Activated CD8-positive, alpha-beta T cell treated with anti-CD3 and anti-CD28 coated beads, Interleukin-2, amount 10 ng/mL, durations not matched to agents 7 days and 5 days (primary cell): ENCODE measurements at regions of chr5 and their contacts with region 1.

Region 1: GRCh38 chr5:126499853-126500342 is 76.7 kb downstream of the GRAMD2B start:
- DNase-seq: peak; percentile 56
- ATAC-seq: peak; percentile 76
- H3K4me3 Mint-ChIP-seq: no peak overlapping the region
- H3K27ac Mint-ChIP-seq: no peak overlapping the region
- H3K4me1 Mint-ChIP-seq: peaks cover 5% of the 10 kb centered on the region
- H3K27me3 Mint-ChIP-seq: no peaks in the 10 kb centered on the region

Region 2: DNA sequence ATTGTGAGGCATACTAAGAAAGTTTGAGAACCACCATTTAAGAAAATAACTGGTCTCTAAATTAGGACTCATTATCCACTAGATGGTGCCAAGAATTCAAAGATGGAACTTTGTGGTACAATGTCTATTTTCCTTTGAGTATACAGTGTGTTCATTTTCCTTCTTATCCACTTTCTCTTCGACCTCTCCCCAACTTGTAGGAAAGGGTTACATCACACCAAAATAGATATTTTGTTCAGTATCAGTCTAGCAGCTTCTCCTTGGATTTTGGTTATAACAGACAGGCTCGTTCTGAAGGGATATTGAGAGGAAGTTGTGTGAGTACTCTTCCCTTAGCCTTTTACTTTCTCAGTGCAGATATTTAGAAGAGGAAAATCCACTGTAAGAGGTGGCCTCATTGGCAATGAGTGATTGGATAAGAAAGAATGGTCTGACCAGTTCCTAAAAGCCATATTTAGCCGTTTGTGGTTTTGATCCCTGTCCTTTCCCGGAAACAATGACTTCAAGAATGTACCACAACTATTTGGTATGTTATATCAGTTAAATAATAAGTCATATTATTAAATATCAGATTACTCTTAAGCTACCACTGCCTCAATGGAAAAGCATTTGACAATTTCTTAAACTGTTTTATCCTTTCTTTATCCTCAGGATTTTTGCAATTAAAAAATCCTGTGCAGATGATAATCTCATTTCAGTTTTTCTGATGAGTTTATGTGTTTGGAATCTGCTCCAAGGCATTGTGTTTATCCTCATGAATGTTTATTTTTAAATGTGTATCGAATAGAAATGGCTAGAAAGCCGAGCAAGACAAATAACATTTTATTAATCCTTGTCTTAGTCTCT is 145.7 kb before region 1 on chr5:
- CTCF ChIA-PET with region 1: interaction called, 89 read pairs
- POLR2A ChIA-PET with region 1: no interaction called
- DNase-seq: no peak
- ATAC-seq: peak; percentile 67
- H3K4me3 Mint-ChIP-seq: peak overlapping the region; percentile 2
- H3K27ac Mint-ChIP-seq: no peak overlapping the region
- H3K4me1 Mint-ChIP-seq: peaks cover 18% of the 10 kb centered on the region
- H3K27me3 Mint-ChIP-seq: peaks cover 3% of the 10 kb centered on the region

Region 3: GRCh38 chr5:126449751-126450271 is 50.1 kb before region 1 on chr5:
- CTCF ChIA-PET with region 1: interaction called, 20 read pairs
- POLR2A ChIA-PET with region 1: interaction called, 3 read pairs
- DNase-seq: peak; percentile 79
- ATAC-seq: peak; percentile 93
- H3K4me3 Mint-ChIP-seq: peak overlapping the region; percentile 82
- H3K27ac Mint-ChIP-seq: peak overlapping the region; percentile 100
- H3K4me1 Mint-ChIP-seq: peaks cover 60% of the 10 kb centered on the region
- H3K27me3 Mint-ChIP-seq: no peaks in the 10 kb centered on the region

Region 4: DNA sequence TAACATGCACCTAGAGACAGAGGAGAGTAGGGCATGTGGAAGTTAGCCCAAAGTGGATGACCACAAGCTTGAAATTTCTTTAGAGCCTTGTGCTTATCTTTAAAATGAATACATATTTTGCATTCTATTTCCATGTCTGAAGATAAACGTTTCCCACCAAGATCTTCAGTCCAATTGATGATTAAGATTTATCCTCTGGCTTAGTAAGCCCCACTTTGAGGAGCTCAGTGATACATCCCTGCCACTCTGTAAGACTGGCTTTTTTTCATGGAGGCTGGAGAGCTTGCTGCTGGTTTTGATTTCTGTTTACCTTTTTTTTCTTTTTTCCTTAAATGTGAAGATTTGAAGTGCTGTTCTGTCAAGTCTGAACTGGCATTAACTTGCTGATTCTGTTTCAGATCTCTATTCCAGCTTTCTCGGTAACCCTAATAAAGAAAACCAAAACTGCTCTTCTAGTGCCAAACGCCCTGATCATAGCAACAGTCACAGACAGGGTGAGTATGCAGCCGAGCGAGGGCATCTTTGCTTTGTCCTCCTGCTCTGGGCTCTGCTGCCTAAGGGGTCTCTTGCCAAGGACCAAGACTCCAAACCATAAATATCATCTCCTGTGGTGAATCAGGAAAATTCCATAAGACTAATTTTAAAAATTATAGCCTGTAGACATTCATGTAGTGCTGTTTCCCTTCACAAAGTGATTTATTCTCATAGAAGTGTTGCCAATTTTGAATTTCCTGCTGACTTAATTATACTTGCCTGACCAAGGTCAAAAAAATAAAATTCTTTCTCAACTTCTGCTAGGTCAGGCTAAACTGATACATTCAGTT is 22.4 kb before region 1 on chr5:
- CTCF ChIA-PET with region 1: interaction called, 35 read pairs
- POLR2A ChIA-PET with region 1: no interaction called
- DNase-seq: no peak
- ATAC-seq: no peak
- H3K4me3 Mint-ChIP-seq: no peak overlapping the region
- H3K27ac Mint-ChIP-seq: no peak overlapping the region
- H3K4me1 Mint-ChIP-seq: no peaks in the 10 kb centered on the region
- H3K27me3 Mint-ChIP-seq: no peaks in the 10 kb centered on the region

Region 5: GRCh38 chr5:126519634-126520592 is 20.0 kb after region 1 on chr5:
- CTCF ChIA-PET with region 1: interaction called, 21 read pairs
- POLR2A ChIA-PET with region 1: no interaction called
- DNase-seq: no peak
- ATAC-seq: no peak
- H3K4me3 Mint-ChIP-seq: no peak overlapping the region
- H3K27ac Mint-ChIP-seq: no peak overlapping the region
- H3K4me1 Mint-ChIP-seq: no peaks in the 10 kb centered on the region
- H3K27me3 Mint-ChIP-seq: peaks cover 2% of the 10 kb centered on the region

Region 6: DNA sequence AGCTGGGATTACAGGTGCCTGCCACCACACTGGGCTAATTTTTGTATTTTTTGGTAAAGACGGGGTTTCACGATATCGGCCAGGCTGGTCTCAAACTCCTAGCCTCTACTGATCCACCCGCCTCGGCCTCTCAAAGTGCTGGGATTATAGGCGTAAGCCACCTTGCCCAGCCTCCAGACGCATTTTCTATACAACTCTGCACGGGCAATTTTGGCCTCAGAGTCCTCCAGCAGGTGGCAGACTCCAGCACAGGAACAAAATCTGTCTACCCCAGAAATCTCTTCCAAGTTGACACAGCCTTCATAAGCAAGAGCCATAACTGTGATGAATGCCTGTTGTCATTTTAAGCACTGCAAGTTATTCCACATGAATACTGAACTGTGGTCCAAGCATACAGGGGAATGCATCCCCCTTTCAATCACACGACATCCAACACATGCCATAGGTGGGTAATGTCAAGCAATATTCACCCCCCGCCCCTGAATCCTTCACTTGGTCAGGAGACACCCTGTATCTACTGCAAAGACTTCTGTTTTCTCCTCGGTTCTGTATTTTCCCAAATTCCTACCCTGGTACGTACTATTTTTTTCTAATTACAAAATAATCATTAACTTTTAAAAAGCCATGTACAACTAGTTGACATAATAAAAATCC is 44.3 kb after region 1 on chr5:
- CTCF ChIA-PET with region 1: interaction called, 27 read pairs
- POLR2A ChIA-PET with region 1: interaction called, 3 read pairs
- DNase-seq: peak; percentile 50
- ATAC-seq: peak; percentile 57
- H3K4me3 Mint-ChIP-seq: no peak overlapping the region
- H3K27ac Mint-ChIP-seq: no peak overlapping the region
- H3K4me1 Mint-ChIP-seq: no peaks in the 10 kb centered on the region
- H3K27me3 Mint-ChIP-seq: no peaks in the 10 kb centered on the region